ENCODE measurements at regions of chr11 and their contacts with region 1.

Region 1: GRCh38 chr11:120134201-120134924 is 3.5 kb downstream of the TRIM29 start:
- DNase-seq: no peak
- ATAC-seq: no peak
- H3K4me3 ChIP-seq: no peak overlapping the region
- H3K27ac ChIP-seq: no peak overlapping the region
- H3K4me1 ChIP-seq: no peaks in the 10 kb centered on the region
- H3K27me3 ChIP-seq: peaks cover 0 to 2% (median 0%) of the 10 kb centered on the region in 3 donors
- CTCF ChIP-seq: no peak
- POLR2A ChIP-seq: no peak

Region 2: GRCh38 chr11:120192831-120193625 is 58.7 kb after region 1 on chr11:
- in situ Hi-C with region 1: no loop called
- intact Hi-C with region 1: loop called (anchors 2 kb)
- DNase-seq: no peak
- ATAC-seq: no peak
- H3K4me3 ChIP-seq: no peak overlapping the region
- H3K27ac ChIP-seq: no peak overlapping the region
- H3K4me1 ChIP-seq: peaks cover 0 to 3% of the 10 kb centered on the region in 2 donors
- H3K27me3 ChIP-seq: peaks cover 0 to 12% (median 0%) of the 10 kb centered on the region in 3 donors
- CTCF ChIP-seq: no peak
- POLR2A ChIP-seq: no peak

Region 3: DNA sequence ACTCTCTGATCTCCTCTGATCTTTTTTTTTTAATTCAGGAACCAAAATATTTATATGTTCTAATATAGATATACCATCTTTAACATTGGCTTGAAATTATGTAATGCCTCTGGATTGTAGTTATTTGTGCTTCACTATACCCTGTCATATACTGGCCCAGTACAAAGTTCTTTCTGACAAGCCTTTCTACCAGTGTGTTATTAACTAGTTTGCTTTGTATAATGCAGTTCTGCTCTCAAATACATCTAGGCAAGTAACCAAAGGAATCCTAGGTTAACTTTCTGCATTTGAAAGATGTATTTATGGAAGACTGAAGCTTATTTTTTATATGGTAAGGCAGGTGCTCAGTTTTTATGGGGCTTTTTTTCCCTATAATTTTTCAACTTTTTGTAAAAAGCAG is 237.9 kb after region 1 on chr11:
- in situ Hi-C with region 1: no loop called
- intact Hi-C with region 1: no loop called
- DNase-seq: no peak
- ATAC-seq: no peak
- H3K4me3 ChIP-seq: no peak overlapping the region
- H3K27ac ChIP-seq: peak overlapping the region in 3 of 4 donors; percentile 3 to 38 (median 24)
- H3K4me1 ChIP-seq: peaks cover 42 to 53% of the 10 kb centered on the region in 2 donors
- H3K27me3 ChIP-seq: no peaks in the 10 kb centered on the region
- CTCF ChIP-seq: no peak
- POLR2A ChIP-seq: no peak

Measured in gastrocnemius medialis (tissue), 4 donors.